ENCODE measurements at regions of chr3 and their contacts with region 1.

Region 1: DNA sequence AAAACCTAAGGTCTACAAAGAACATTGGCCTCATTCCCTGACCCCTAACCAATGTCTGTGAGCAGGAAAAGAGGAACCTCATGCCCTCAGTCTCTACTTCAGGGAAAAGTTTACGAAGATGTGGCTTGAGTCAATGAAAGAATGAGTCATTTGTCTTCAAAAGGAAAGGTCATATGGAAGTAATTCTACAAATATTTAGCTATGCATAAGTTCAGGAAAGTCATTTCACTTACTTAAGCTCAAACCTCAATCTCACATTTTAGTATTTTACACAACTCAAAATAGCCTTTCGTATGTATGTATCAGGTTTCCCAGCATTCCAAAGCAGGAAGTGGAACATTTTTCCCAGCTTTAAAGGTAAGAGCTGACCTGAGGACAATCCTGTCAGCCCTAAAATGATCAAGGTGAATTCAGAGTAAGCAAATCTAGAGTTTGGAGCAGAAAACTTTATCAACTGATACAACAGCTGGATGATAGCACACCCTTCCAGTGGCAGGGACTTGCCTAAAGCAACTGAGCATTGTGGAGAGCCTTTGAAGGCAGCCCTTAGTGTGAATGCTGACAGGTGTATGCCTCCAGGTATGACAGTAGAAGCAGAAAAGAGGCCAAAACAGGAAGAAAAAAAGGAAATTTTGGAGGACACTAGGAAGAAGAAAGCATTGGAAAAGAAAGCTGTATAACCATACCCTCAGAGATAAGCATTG is 53.9 kb upstream of the ACKR4 start:
- DNase-seq: peak; percentile 97
- ATAC-seq: peak; percentile 89
- H3K4me3 ChIP-seq: no peak overlapping the region
- H3K27ac ChIP-seq: peak overlapping the region; percentile 98
- H3K4me1 ChIP-seq: peaks cover 25% of the 10 kb centered on the region
- H3K27me3 ChIP-seq: no peaks in the 10 kb centered on the region
- CTCF ChIP-seq: no peak
- POLR2A ChIP-seq: no peak
- RAD21 ChIP-seq: no peak

Region 2: DNA sequence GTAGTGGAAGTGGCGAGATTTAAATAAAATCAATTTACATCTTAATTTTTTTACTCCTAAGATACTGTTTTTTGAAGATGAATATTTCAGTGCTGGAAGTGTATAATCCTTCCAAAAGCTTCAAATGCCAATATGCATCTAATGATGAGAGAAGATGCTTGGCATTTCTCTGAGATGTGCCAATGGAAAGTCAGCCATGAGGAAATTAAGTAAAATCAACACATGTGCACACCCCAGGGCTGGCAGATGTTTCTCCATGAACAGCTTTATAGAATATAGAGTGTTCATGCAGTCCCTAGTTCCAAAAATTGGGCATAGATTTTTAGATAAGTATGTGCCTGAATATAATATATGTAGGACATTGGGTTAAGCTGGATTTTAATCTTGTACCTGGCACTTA is 598.5 kb before region 1 on chr3:
- CTCF ChIA-PET with region 1: no interaction called
- POLR2A ChIA-PET with region 1: no interaction called
- dilution Hi-C with region 1: no loop called
- in situ Hi-C with region 1: no loop called
- intact Hi-C with region 1: no loop called
- DNase-seq: no peak
- ATAC-seq: no peak
- H3K4me3 ChIP-seq: no peak overlapping the region
- H3K27ac ChIP-seq: no peak overlapping the region
- H3K4me1 ChIP-seq: no peaks in the 10 kb centered on the region
- H3K27me3 ChIP-seq: no peaks in the 10 kb centered on the region
- CTCF ChIP-seq: no peak
- POLR2A ChIP-seq: no peak
- RAD21 ChIP-seq: no peak

Region 3: DNA sequence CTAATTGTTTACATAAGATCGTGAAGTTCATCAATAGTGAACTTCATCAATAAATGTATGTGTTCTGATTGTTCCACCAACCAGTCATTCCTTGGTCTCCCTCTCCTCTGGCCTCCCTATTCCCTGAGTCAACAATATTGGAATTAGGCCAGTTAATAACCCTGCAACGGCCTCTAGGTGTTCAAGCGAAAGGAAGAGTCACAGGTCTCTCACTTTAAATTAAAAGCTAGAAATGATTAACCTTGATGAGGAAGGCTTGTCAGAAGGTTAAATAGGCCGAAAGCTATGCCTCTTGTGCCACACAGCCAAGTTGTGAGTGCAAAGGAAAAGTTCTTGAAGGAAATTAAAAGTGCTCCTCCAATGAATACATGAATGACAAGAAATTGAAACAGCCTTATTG is 35.5 kb before region 1 on chr3:
- CTCF ChIA-PET with region 1: no interaction called
- POLR2A ChIA-PET with region 1: no interaction called
- dilution Hi-C with region 1: no loop called
- in situ Hi-C with region 1: no loop called
- intact Hi-C with region 1: no loop called
- DNase-seq: no peak
- ATAC-seq: no peak
- H3K4me3 ChIP-seq: no peak overlapping the region
- H3K27ac ChIP-seq: no peak overlapping the region
- H3K4me1 ChIP-seq: no peaks in the 10 kb centered on the region
- H3K27me3 ChIP-seq: no peaks in the 10 kb centered on the region
- CTCF ChIP-seq: no peak
- POLR2A ChIP-seq: no peak
- RAD21 ChIP-seq: no peak

Region 4: GRCh38 chr3:132593947-132594323 is 50.7 kb after region 1 on chr3:
- CTCF ChIA-PET with region 1: no interaction called
- POLR2A ChIA-PET with region 1: no interaction called
- dilution Hi-C with region 1: no loop called
- in situ Hi-C with region 1: no loop called
- intact Hi-C with region 1: loop called (anchors 5 kb)
- DNase-seq: peak; percentile 85
- ATAC-seq: peak; percentile 88
- H3K4me3 ChIP-seq: no peak overlapping the region
- H3K27ac ChIP-seq: peak overlapping the region; percentile 100
- H3K4me1 ChIP-seq: peaks cover 8% of the 10 kb centered on the region
- H3K27me3 ChIP-seq: no peaks in the 10 kb centered on the region
- CTCF ChIP-seq: no peak
- POLR2A ChIP-seq: no peak
- RAD21 ChIP-seq: no peak

Measured in IMR-90 (cell line).